HepG2 (cell line): ENCODE measurements at regions of chr2 and their contacts with region 1.

Region 1: GRCh38 chr2:227106845-227107759 is 56.9 kb downstream of the COL4A4 start:
- DNase-seq: peak; percentile 73
- ATAC-seq: peak; percentile 100
- H3K4me3 ChIP-seq: no peak overlapping the region
- H3K27ac ChIP-seq: no peak overlapping the region
- H3K4me1 ChIP-seq: no peaks in the 10 kb centered on the region
- H3K27me3 ChIP-seq: peaks cover 0 to 7% of the 10 kb centered on the region in 2 experiments; a peak in 1 of 5 replicates
- CTCF ChIP-seq: peak; percentile 94
- EP300 ChIP-seq: no peak
- POLR2A ChIP-seq: no peak
- RAD21 ChIP-seq: peak; percentile 89

Region 2: DNA sequence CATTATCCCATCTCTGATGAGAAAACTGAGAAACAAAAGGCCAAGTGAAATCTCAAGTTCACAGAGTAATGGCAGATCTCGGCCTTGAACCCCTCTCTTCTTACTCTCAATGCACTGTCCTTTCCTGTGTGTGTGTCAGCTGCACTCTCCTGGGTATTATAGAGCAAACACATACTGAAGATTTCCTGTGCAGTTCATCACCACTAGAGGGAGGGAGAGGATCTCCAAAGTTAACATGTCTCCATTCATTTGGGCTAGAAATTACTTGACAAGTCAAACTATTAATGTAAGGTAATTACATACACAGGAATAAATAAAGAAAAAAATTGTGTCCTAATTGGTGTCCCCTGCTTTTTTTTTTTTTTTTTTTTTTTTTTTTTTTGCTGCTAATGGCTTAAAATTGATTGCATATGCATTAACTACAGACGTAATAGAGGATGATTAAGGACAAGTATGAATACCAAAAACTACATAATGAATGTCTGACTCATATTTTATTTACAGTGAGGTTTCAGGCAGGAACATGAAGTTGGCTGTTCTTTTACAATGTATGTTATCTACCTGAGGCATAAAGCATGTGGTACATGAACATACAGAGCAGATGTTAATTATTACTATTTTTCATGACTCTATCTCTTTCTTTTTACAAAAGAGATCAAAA is 1438.4 kb before region 1 on chr2:
- CTCF ChIA-PET with region 1: interaction called, 18 read pairs
- POLR2A ChIA-PET with region 1: no interaction called
- in situ Hi-C with region 1: loop called (anchors 5 kb)
- intact Hi-C with region 1: loop called (anchors 1 kb)
- DNase-seq: peak; percentile 65
- ATAC-seq: peak; percentile 95
- H3K4me3 ChIP-seq: no peak overlapping the region
- H3K27ac ChIP-seq: no peak overlapping the region
- H3K4me1 ChIP-seq: no peaks in the 10 kb centered on the region
- H3K27me3 ChIP-seq: no peaks in the 10 kb centered on the region
- CTCF ChIP-seq: peak; percentile 85
- EP300 ChIP-seq: no peak
- POLR2A ChIP-seq: no peak
- RAD21 ChIP-seq: 0 out of 2 replicates have a peak, but pooled peaks have one; percentile 31

Region 3: GRCh38 chr2:226813148-226813701 is 293.9 kb before region 1 on chr2:
- CTCF ChIA-PET with region 1: no interaction called
- POLR2A ChIA-PET with region 1: no interaction called
- in situ Hi-C with region 1: loop called (anchors 10 kb)
- intact Hi-C with region 1: loop called (anchors 1 kb)
- DNase-seq: no peak
- ATAC-seq: peak; percentile 71
- H3K4me3 ChIP-seq: no peak overlapping the region
- H3K27ac ChIP-seq: no peak overlapping the region
- H3K4me1 ChIP-seq: no peaks in the 10 kb centered on the region
- H3K27me3 ChIP-seq: no peaks in the 10 kb centered on the region; a peak in 1 of 5 replicates
- CTCF ChIP-seq: peak; percentile 57
- EP300 ChIP-seq: no peak
- POLR2A ChIP-seq: no peak
- RAD21 ChIP-seq: 0 out of 2 replicates have a peak, but pooled peaks have one; percentile 34

Region 4: GRCh38 chr2:226994798-226995197 is 112.3 kb before region 1 on chr2:
- CTCF ChIA-PET with region 1: interaction called, 8 read pairs
- POLR2A ChIA-PET with region 1: no interaction called
- in situ Hi-C with region 1: no loop called
- intact Hi-C with region 1: loop called (anchors 1 kb)
- DNase-seq: peak; percentile 23
- ATAC-seq: peak; percentile 81
- H3K4me3 ChIP-seq: no peak overlapping the region
- H3K27ac ChIP-seq: no peak overlapping the region
- H3K4me1 ChIP-seq: no peaks in the 10 kb centered on the region
- H3K27me3 ChIP-seq: no peaks in the 10 kb centered on the region
- CTCF ChIP-seq: peak; percentile 56
- EP300 ChIP-seq: no peak
- POLR2A ChIP-seq: no peak
- RAD21 ChIP-seq: no peak

Region 5: GRCh38 chr2:227033471-227034148 is 73.5 kb before region 1 on chr2:
- CTCF ChIA-PET with region 1: interaction called, 32 read pairs
- POLR2A ChIA-PET with region 1: no interaction called
- in situ Hi-C with region 1: loop called (anchors 5 kb)
- intact Hi-C with region 1: loop called (anchors 1 kb)
- DNase-seq: peak; percentile 43
- ATAC-seq: peak; percentile 99
- H3K4me3 ChIP-seq: no peak overlapping the region
- H3K27ac ChIP-seq: no peak overlapping the region
- H3K4me1 ChIP-seq: peaks cover 7% of the 10 kb centered on the region
- H3K27me3 ChIP-seq: no peaks in the 10 kb centered on the region; a peak in 3 of 5 replicates
- CTCF ChIP-seq: peak; percentile 90
- EP300 ChIP-seq: no peak
- POLR2A ChIP-seq: no peak
- RAD21 ChIP-seq: peak; percentile 70; the same call in 1 of the 2 replicates

Region 6: GRCh38 chr2:227095346-227095745 is 11.8 kb before region 1 on chr2:
- CTCF ChIA-PET with region 1: no interaction called
- POLR2A ChIA-PET with region 1: no interaction called
- in situ Hi-C with region 1: no loop called
- intact Hi-C with region 1: loop called (anchors 1 kb)
- DNase-seq: no peak
- ATAC-seq: no peak
- H3K4me3 ChIP-seq: no peak overlapping the region
- H3K27ac ChIP-seq: no peak overlapping the region
- H3K4me1 ChIP-seq: no peaks in the 10 kb centered on the region
- H3K27me3 ChIP-seq: no peaks in the 10 kb centered on the region
- CTCF ChIP-seq: no peak
- EP300 ChIP-seq: no peak
- POLR2A ChIP-seq: no peak
- RAD21 ChIP-seq: no peak